ENCODE measurements at regions of chr2 and their contacts with region 1.

Region 1: DNA sequence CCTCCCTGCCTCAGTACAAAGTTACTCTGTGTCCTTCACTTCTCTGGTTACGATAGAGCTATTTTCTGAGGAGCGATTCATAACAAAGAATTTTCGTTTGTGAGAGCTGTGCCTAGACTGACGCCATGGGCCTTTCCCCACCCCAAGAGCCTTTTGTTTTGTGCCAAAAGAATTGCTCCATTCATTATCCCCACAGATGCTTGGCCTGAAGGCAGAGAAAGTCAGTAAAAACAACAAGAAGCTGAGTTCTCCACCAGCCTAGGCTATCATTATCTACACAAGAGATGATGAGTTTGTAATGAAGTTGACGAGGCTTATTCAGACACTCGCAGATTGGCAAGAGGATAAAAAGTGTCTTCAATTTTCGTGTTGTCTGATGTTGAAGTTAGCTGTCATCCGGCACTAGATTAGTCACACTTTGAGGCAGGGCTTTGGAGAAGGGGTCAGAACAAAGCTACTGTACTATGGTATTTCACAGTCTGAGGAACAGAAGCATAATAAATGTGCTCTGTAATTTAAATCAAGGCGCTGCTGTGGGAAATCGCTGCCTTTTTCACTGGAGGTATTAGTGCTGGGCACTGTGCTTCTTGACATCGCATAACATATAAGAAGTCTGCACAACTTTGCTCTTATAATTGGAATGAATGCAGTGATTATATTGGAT is 278.4 kb upstream of the FIGN start:
- DNase-seq: peak in 7 of 10 donors; percentile 19 to 87 (median 50)

Region 2: DNA sequence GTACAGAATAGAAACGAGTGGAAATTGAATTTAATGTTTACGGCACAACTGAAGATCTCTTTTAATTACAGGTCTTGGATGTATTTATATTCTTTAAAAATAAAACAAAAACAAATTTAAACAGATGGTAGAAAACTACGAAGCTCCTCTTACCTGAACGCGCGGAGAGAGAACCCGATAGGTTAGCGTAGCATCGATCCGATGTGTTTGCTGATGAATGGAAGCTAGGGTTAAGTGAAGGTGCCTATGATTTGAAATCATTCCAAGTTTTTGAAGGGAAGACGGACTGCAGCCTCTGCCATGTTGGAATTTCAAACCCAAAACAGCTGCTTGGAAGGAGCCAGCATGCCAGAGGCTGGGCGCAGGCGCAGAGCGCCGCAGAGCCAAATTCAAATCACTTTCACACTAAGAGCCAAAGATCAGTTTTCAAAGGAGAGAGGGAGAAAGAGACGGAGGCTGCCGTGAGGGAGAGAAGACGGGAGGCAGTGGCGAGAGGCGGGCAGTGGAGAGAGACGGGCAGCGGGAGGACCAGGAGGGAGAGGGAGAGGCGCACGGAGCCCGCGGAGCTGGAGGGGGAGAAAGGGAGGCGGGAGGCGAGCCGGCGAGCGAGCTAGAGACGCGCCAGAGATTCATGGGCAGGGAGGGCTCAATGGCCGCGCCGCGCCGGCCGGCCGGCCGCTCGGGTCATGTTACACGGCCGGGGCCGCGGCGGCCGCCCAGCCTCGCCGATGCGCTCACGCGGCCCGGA is 278.3 kb before region 1 on chr2 and contains the start of gene FIGN:
- intact Hi-C with region 1: loop called (anchors 5 kb)
- DNase-seq: peak; percentile 69 to 97 (median 76)

Region 3: DNA sequence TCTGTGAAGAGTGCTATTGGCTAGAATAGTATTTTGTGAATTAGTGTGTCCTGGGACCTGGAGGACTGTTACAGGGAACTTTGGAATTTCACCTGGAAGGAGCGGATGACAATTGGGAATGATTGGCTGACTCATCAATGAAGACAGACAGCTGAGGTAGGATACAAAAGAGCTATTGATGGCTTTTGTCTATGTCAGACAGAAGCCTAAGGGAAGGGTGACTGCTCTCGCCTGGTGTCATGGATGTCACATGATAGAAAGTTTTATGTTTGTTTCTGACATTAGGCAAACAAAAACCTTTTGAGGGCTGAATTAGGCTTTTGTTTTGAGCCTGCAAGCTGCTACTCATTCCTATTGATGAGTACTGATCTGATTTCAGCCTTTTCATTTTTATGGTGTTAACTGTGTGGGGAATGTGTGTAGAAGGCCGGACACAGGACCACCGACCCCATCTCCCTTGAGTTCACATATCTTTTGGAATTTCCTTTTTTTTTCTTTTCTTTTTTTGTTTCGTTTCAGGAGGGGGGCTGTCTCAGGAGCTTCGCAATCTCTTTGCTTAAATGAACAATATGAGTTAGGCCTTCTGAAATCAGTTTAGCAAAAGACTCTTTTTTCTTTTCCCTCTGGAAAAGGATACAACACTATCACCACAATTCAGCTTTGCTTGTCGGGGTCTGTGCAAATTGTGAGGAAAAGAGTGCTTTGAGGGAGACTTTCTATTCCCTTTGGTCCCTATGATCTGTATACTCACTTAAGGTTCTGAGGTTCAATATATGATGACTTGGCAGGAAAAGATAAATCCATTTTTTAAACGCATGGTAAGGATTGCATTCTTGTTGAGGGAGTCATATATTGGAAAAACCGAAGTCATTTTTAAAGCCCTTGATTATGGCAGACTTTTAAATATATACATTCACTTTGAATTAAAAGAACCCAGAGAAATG is 70.5 kb before region 1 on chr2:
- intact Hi-C with region 1: loop called (anchors 5 kb)
- DNase-seq: peak in 3 of 10 donors; percentile 5 to 48 (median 34)

Measured in posterior cingulate gyrus (tissue), 11 donors.